ENCODE measurements at regions of chr16 and their contacts with region 1.

Region 1: GRCh38 chr16:24539291-24539849 is at the start of gene RBBP6:
- DNase-seq: peak; percentile 92
- H3K4me3 Mint-ChIP-seq: peak within 1 kb of the TSS; percentile 99
- H3K27ac Mint-ChIP-seq: peak within 1 kb of the TSS; percentile 100
- H3K4me1 Mint-ChIP-seq: peaks cover 27% of the 10 kb centered on the region
- H3K27me3 Mint-ChIP-seq: no peaks in the 10 kb centered on the region
- total RNA-seq, gene RBBP6: 64.4 to 65.0 TPM

Region 2: DNA sequence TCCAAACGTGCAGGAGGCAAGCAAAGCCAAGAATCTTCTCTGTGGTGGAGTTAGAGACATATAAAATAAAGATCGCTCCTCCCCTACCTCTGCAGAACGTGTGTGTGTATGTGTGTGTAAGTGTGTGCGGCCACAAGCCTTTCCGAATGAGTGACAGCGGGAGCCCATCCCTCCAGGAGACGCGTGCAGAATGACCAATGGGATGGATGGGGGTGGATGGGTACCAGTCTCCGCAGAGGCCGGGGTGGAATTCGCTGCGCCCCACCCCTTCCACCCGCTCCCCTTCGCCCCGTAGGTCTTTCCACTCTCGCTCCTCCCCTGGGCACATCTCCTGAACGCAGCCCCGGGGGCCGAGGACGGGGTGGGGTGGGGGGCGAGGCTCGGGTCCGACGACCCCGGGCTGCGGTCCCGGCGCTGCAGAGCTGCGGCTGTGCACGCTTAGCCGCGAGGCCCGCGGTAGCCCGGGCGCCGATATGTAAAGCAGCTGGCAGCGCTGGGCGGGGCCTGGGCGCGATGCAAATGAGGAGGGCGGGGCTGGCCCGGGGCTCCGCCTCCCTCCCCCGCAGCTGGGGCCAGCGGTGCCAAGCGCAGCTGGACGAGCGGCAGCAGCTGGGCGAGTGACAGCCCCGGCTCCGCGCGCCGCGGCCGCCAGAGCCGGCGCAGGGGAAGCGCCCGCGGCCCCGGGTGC is 703.8 kb before region 1 on chr16 and contains the start of gene PRKCB:
- CTCF ChIA-PET with region 1: no interaction called
- intact Hi-C with region 1: loop called (anchors 10 kb)
- DNase-seq: peak; percentile 91
- H3K4me3 Mint-ChIP-seq: peak within 1 kb of the TSS; percentile 91
- H3K27ac Mint-ChIP-seq: peak within 1 kb of the TSS; percentile 40
- H3K4me1 Mint-ChIP-seq: peaks cover 57% of the 10 kb centered on the region
- H3K27me3 Mint-ChIP-seq: no peaks in the 10 kb centered on the region
- total RNA-seq, gene PRKCB: 37.1 to 38.9 TPM

Region 3: GRCh38 chr16:24552705-24553246 is 13.4 kb after region 1 on chr16:
- CTCF ChIA-PET with region 1: interaction called, 6 read pairs
- intact Hi-C with region 1: loop called (anchors 1 kb)
- DNase-seq: no peak
- H3K4me3 Mint-ChIP-seq: no peak overlapping the region
- H3K27ac Mint-ChIP-seq: no peak overlapping the region
- H3K4me1 Mint-ChIP-seq: peaks cover 26% of the 10 kb centered on the region
- H3K27me3 Mint-ChIP-seq: no peaks in the 10 kb centered on the region

Region 4: GRCh38 chr16:24729362-24729984 is 190.1 kb after region 1 on chr16 and contains the start of gene TNRC6A:
- CTCF ChIA-PET with region 1: interaction called, 4 read pairs
- intact Hi-C with region 1: loop called (anchors 1 kb)
- DNase-seq: peak; percentile 77
- H3K4me3 Mint-ChIP-seq: peak within 1 kb of the TSS; percentile 96
- H3K27ac Mint-ChIP-seq: peak within 1 kb of the TSS; percentile 96
- H3K4me1 Mint-ChIP-seq: peaks cover 48% of the 10 kb centered on the region
- H3K27me3 Mint-ChIP-seq: no peaks in the 10 kb centered on the region
- total RNA-seq, gene TNRC6A: 37.2 to 39.0 TPM

Region 5: GRCh38 chr16:24753437-24753836 is 214.1 kb after region 1 on chr16:
- CTCF ChIA-PET with region 1: interaction called, 3 read pairs
- intact Hi-C with region 1: loop called (anchors 1 kb)
- DNase-seq: peak; percentile 65
- H3K4me3 Mint-ChIP-seq: peak overlapping the region; percentile 1
- H3K27ac Mint-ChIP-seq: peak overlapping the region; percentile 87
- H3K4me1 Mint-ChIP-seq: peaks cover 66% of the 10 kb centered on the region
- H3K27me3 Mint-ChIP-seq: no peaks in the 10 kb centered on the region

Region 6: GRCh38 chr16:25045696-25046381 is 506.5 kb after region 1 on chr16:
- CTCF ChIA-PET with region 1: interaction called, 3 read pairs
- intact Hi-C with region 1: loop called (anchors 2 kb)
- DNase-seq: no peak
- H3K4me3 Mint-ChIP-seq: no peak overlapping the region
- H3K27ac Mint-ChIP-seq: peak overlapping the region; percentile 8
- H3K4me1 Mint-ChIP-seq: peaks cover 55% of the 10 kb centered on the region
- H3K27me3 Mint-ChIP-seq: no peaks in the 10 kb centered on the region

Region 7: GRCh38 chr16:25257504-25257955 is 718.2 kb after region 1 on chr16 and contains the start of gene ZKSCAN2:
- CTCF ChIA-PET with region 1: no interaction called
- intact Hi-C with region 1: loop called (anchors 2 kb)
- DNase-seq: peak; percentile 87
- H3K4me3 Mint-ChIP-seq: peak within 1 kb of the TSS; percentile 89
- H3K27ac Mint-ChIP-seq: peak within 1 kb of the TSS; percentile 97
- H3K4me1 Mint-ChIP-seq: peaks cover 61% of the 10 kb centered on the region
- H3K27me3 Mint-ChIP-seq: no peaks in the 10 kb centered on the region
- total RNA-seq, gene ZKSCAN2: 4.5 to 5.0 TPM